ENCODE measurements at regions of chr7 and their contacts with region 1.

Region 1: DNA sequence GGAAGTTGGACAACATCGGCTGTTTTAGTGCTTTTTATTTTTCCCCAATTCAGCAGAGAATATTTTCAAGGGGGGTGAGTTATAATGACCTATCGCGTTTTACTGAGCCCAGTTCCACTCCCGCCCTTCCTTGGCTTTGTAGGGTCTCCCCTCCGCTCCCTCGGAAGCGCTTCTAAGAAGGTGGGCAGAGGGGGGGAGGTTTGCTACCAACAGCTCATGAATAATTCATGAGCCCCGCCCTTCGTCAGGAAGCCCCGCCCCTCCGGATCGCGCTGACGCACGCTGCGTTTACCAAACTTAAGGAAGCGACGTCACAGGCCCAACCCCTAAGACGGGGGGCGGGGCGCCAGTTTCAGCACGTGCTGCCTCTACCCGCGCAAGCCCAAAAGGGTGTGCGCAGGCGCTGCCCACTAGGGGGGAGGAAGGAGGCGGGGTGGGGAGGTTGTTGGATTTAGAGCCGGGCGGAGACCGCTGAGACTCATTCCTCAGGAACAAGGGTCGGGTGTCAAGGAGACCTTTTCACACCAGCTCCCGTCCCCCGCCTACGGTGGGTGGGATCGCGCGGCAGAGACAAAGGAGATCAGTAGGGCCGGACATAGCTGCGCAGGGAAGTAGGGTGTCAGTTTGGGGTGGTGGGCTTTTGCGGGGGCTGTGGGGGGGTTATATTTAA is 529 bp upstream of the MEPCE start:
- DNase-seq: peak; percentile 100
- ATAC-seq: peak; percentile 58
- H3K4me3 Mint-ChIP-seq: peak overlapping the region; percentile 98
- H3K27ac Mint-ChIP-seq: peak overlapping the region; percentile 100
- H3K4me1 Mint-ChIP-seq: peaks cover 45% of the 10 kb centered on the region
- H3K27me3 Mint-ChIP-seq: no peaks in the 10 kb centered on the region
- CTCF ChIP-seq: no peak

Region 2: GRCh38 chr7:99918959-99919813 is 509.9 kb before region 1 on chr7 and contains the start of gene TRIM4:
- CTCF ChIA-PET with region 1: no interaction called
- POLR2A ChIA-PET with region 1: interaction called, 9 read pairs
- intact Hi-C with region 1: loop called (anchors 10 kb)
- DNase-seq: peak; percentile 80
- ATAC-seq: peak; percentile 97
- H3K4me3 Mint-ChIP-seq: peak within 1 kb of the TSS; percentile 94
- H3K27ac Mint-ChIP-seq: peak within 1 kb of the TSS; percentile 93
- H3K4me1 Mint-ChIP-seq: peaks cover 49% of the 10 kb centered on the region
- H3K27me3 Mint-ChIP-seq: no peaks in the 10 kb centered on the region
- CTCF ChIP-seq: no peak
- total RNA-seq, gene TRIM4: 33.1 and 35.8 TPM in 2 replicates

Region 3: DNA sequence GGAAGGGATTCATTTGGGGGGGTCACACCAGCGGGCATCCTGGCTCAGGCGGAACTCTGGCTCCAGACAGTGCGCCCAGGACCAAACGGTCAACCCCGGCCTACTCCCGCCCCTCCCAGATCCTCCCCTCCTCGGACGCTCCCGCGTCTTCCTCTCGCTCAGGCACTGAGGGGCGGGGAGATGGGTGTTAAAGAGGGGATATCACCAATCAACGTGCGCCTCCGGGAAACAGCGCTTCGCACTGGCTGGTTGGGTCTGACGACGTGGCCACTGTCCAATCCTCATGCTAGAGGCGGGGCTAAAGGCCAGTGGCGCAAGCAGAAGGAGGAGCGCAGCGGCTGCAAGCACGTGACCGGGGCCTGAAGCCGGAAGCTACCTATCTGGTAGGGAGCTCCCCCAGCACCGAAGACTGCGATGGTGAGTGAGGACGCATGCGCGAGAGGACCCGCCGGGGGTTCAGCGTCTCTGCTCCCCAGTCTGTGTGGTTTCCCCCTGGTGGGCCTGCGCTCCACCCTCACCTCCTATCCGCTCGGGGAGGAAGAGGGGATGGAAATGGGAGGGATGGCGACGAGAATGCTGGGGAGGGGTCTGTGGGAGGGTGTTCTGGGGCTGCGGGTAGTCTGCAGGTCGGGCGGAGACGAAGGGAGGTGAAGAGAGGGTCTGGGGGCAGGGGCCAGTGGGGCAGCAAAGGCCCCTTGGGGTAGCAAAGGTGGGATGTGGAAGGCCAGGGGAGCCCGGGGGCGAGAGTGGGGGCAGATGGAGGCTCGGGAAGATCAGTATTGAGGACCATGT is 280.3 kb before region 1 on chr7 and contains the start of gene LAMTOR4:
- CTCF ChIA-PET with region 1: no interaction called
- POLR2A ChIA-PET with region 1: interaction called, 28 read pairs
- intact Hi-C with region 1: loop called (anchors 2 kb)
- DNase-seq: peak; percentile 86
- ATAC-seq: peak; percentile 98
- H3K4me3 Mint-ChIP-seq: peak within 1 kb of the TSS; percentile 100
- H3K27ac Mint-ChIP-seq: peak within 1 kb of the TSS; percentile 99
- H3K4me1 Mint-ChIP-seq: peaks cover 46% of the 10 kb centered on the region
- H3K27me3 Mint-ChIP-seq: no peaks in the 10 kb centered on the region
- CTCF ChIP-seq: no peak
- total RNA-seq, gene LAMTOR4: 151 and 161 TPM in 2 replicates

Region 4: DNA sequence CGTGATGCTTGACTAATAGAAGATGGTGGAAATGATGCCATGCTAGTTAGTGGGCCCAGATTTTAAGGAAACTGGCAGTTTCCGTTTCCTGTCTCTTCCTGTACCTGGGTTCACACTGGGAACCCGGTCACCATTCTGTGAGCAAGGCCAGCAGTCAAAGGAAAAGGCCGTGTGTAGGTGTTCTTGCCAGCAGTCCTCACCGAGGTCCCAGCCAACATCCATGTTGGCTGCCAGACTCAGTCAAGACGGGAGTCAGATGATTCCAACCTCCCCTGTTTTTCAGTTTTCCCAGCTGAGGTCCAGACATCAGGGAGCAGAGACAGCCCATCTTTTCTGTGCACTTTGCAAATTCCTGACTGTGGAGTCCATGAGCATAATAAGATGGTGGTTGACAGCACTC is 86.3 kb before region 1 on chr7:
- CTCF ChIA-PET with region 1: no interaction called
- POLR2A ChIA-PET with region 1: interaction called, 17 read pairs
- intact Hi-C with region 1: loop called (anchors 2 kb)
- DNase-seq: no peak
- ATAC-seq: no peak
- H3K4me3 Mint-ChIP-seq: no peak overlapping the region
- H3K27ac Mint-ChIP-seq: peak overlapping the region; percentile 76
- H3K4me1 Mint-ChIP-seq: peaks cover 43% of the 10 kb centered on the region
- H3K27me3 Mint-ChIP-seq: no peaks in the 10 kb centered on the region
- CTCF ChIP-seq: no peak

Region 5: DNA sequence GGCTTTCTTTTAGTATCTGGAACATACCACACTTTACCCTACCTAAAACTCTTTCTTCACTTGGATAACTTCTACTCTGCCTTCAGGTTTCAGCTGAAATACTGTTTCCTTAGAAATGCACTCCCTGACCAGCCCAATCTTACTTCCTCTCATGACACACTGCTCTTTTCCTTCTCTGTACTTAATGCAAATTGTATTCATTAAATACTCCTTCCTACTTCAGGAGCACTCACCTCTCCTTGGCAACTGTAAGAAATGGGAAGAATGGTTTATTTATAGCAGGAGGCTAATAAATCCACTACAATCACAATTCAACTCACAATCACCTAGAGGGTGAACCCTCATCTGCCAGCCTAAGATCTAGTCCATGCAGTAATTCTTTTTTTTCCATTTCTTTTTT is 15.8 kb before region 1 on chr7:
- CTCF ChIA-PET with region 1: no interaction called
- POLR2A ChIA-PET with region 1: interaction called, 34 read pairs
- intact Hi-C with region 1: no loop called
- DNase-seq: no peak
- ATAC-seq: peak; percentile 34
- H3K4me3 Mint-ChIP-seq: no peak overlapping the region
- H3K27ac Mint-ChIP-seq: peak overlapping the region; percentile 3
- H3K4me1 Mint-ChIP-seq: peaks cover 10% of the 10 kb centered on the region
- H3K27me3 Mint-ChIP-seq: no peaks in the 10 kb centered on the region
- CTCF ChIP-seq: no peak

Region 6: DNA sequence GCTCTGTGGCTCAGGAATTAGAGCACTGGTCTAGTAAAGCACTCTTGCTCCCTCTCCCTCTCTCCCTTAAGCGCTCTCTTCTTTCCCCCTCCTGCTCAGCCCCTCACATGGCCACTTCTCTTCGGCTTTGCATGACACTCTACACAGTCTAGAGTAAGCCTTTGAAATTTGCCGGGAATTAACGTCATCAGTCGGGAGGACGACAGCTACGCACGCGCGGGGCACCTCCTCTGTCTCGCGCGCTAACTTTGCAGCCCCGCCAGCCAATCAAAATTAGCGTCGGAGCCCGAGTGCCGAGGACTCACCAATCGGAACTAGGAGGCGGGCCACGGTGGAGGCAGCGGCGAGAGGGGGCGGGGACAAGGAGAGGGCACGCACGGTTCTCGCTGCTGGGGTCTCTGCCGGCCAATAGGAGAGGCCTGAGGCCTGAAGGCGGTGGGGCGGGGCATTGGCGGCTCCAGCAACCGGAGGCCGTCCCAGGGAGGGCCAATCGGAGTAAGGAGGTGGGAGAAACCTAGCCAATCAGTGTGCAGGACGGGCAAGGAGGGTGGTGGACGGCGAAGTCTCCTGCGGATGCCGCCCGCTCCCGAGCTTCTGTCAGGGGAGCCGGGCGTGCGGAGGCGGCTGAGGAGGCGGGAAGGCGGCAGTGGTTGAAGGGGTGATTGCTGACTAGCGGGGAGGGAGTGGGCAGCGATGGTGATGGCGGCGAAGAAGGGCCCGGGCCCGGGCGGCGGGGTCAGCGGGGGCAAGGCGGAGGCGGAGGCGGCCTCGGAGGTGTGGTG is 109.7 kb after region 1 on chr7 and contains the start of gene AGFG2:
- CTCF ChIA-PET with region 1: no interaction called
- POLR2A ChIA-PET with region 1: interaction called, 6 read pairs
- intact Hi-C with region 1: loop called (anchors 2 kb)
- DNase-seq: peak; percentile 97
- ATAC-seq: peak; percentile 98
- H3K4me3 Mint-ChIP-seq: peak within 1 kb of the TSS; percentile 100
- H3K27ac Mint-ChIP-seq: peak within 1 kb of the TSS; percentile 87
- H3K4me1 Mint-ChIP-seq: peaks cover 32% of the 10 kb centered on the region
- H3K27me3 Mint-ChIP-seq: no peaks in the 10 kb centered on the region
- CTCF ChIP-seq: no peak
- total RNA-seq, gene AGFG2: 9.5 and 10.8 TPM in 2 replicates

Region 7: DNA sequence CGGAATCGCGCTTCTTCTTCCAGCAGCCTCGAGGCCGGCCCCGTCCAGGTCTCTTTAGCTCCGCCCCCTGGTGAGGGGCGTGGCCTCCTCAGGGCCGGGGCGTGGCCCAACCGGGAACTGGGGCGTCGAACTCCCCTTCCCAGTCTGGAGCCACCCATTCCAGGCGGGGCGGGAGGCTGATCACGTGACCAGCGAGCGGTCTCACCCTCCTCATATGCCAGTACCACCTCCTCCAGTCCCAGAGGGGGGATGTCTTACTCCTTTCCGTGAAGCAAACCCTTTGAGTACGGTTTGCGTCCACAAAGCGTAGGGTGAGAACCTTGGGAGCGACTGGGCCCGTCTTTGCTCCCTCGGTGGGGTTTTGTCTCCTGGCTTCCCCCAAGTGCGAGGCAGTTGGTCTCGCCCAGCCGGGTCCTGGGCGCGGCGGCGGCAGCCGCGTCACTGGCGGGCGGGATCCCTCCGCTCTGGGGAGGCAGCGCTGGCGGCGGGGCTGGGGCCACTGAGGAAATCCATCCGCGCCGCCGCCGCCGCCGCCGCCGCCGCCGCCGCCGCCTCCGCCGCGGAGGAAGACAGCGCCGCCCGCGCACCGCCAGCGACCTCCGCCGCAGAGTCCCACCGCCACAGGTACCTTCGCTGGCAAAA is 244.3 kb after region 1 on chr7 and contains the start of gene GNB2:
- CTCF ChIA-PET with region 1: no interaction called
- POLR2A ChIA-PET with region 1: interaction called, 4 read pairs
- intact Hi-C with region 1: loop called (anchors 1 kb)
- DNase-seq: peak; percentile 99
- ATAC-seq: peak; percentile 67
- H3K4me3 Mint-ChIP-seq: peak within 1 kb of the TSS; percentile 97
- H3K27ac Mint-ChIP-seq: peak within 1 kb of the TSS; percentile 95
- H3K4me1 Mint-ChIP-seq: peaks cover 11% of the 10 kb centered on the region
- H3K27me3 Mint-ChIP-seq: no peaks in the 10 kb centered on the region
- CTCF ChIP-seq: no peak
- total RNA-seq, gene GNB2: 129 and 132 TPM in 2 replicates

Measured in activated B cell treated with CpG ODN at 0.5 μM for 24 hours (primary cell).